Heart left ventricle (tissue), 16 donors: ENCODE measurements at regions of chr18 and their contacts with region 1.

Region 1: DNA sequence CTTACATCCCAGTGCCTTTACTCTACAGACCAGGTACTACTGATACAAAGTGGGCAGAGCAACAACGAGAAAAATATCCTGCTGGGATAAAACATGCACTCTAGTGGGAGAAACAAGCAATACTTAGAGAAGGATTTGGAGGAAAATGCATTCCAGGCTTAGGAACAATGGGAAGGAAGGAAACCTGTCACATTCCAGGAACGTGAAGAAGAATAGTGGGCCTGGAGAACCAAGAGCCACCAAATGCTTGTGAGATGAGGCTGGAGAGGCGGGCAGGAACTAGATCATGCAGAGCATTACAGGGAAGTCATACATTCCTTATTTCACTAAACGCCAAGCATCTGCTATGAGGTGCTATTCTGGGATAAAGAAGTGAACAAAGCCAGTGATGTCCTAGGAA is 342.3 kb downstream of the DCC start:
- DNase-seq: no peak
- ATAC-seq: no peak
- H3K4me3 ChIP-seq: no peak overlapping the region
- H3K27ac ChIP-seq: no peak overlapping the region
- H3K4me1 ChIP-seq: no peaks in the 10 kb centered on the region
- H3K27me3 ChIP-seq: peaks cover 0 to 10% (median 0%) of the 10 kb centered on the region in 9 donors
- CTCF ChIP-seq: no peak
- POLR2A ChIP-seq: no peak

Region 2: GRCh38 chr18:52620926-52621439 is 61.3 kb before region 1 on chr18:
- intact Hi-C with region 1: loop called in 1 of 10 experiments (anchors 10 kb)
- DNase-seq: no peak
- ATAC-seq: no peak
- H3K4me3 ChIP-seq: no peak overlapping the region
- H3K27ac ChIP-seq: no peak overlapping the region
- H3K4me1 ChIP-seq: no peaks in the 10 kb centered on the region
- H3K27me3 ChIP-seq: no peaks in the 10 kb centered on the region
- CTCF ChIP-seq: no peak
- POLR2A ChIP-seq: no peak

Region 3: DNA sequence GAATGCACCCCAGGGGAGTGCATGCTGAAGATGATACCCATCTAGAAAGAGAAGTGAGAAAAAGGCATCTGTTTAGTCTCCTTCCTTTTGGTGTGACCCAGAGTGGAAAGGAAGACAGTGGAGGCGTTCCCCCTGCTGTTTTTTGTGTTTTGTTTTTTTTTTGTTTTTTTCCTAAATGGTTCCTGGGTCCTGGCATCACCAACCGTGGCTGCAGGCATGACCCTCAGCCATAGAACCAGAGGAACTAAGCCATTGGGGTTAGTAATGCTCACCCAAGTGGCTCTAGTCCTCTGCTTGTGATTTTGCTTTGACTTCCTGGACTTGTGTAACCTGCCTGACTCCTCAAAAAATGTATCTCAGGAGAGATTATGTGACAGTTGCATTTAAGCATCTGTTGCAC is 109.1 kb after region 1 on chr18:
- intact Hi-C with region 1: no loop called
- DNase-seq: no peak
- ATAC-seq: no peak
- H3K4me3 ChIP-seq: no peak overlapping the region
- H3K27ac ChIP-seq: no peak overlapping the region
- H3K4me1 ChIP-seq: no peaks in the 10 kb centered on the region
- H3K27me3 ChIP-seq: no peaks in the 10 kb centered on the region
- CTCF ChIP-seq: no peak
- POLR2A ChIP-seq: no peak